Pancreas (tissue), 10 donors: ENCODE measurements at regions of chr20 and their contacts with region 1.

Region 1: GRCh38 chr20:47501483-47502270 is at the start of gene NCOA3:
- DNase-seq: peak; percentile 89 to 97 (median 96)
- ATAC-seq: peak; percentile 97 to 98 (median 98)
- H3K4me3 ChIP-seq: peak within 1 kb of the TSS; percentile 60 to 96 (median 84)
- H3K27ac ChIP-seq: peak within 1 kb of the TSS; percentile 79 to 90 (median 86)
- H3K4me1 ChIP-seq: peaks cover 0 to 20% (median 13%) of the 10 kb centered on the region in 3 donors
- H3K27me3 ChIP-seq: no peaks in the 10 kb centered on the region
- CTCF ChIP-seq: peak in 2 of 4 donors; percentile 42 to 58
- total RNA-seq, gene NCOA3: 8.9 to 17.4 (median 11.6) TPM

Region 2: GRCh38 chr20:47620808-47621805 is 119.4 kb after region 1 on chr20:
- intact Hi-C with region 1: loop called in 1 of 3 experiments (anchors 10 kb)
- DNase-seq: no peak
- ATAC-seq: peak; percentile 38 to 77 (median 74)
- H3K4me3 ChIP-seq: no peak overlapping the region
- H3K27ac ChIP-seq: no peak overlapping the region
- H3K4me1 ChIP-seq: no peaks in the 10 kb centered on the region
- H3K27me3 ChIP-seq: no peaks in the 10 kb centered on the region
- CTCF ChIP-seq: peak; percentile 39 to 76 (median 66)